Psoas muscle (tissue), 8 donors: ENCODE measurements at regions of chr5 and their contacts with region 1.

Region 1: GRCh38 chr5:16489322-16489791 is 23.8 kb upstream of the ZNF622 start:
- DNase-seq: no peak
- ATAC-seq: peak; percentile 74 to 79 (median 75)
- H3K4me3 ChIP-seq: peak overlapping the region; percentile 33
- H3K27ac ChIP-seq: peak overlapping the region; percentile 95
- H3K4me1 ChIP-seq: peaks cover 77% of the 10 kb centered on the region
- H3K27me3 ChIP-seq: no peaks in the 10 kb centered on the region
- CTCF ChIP-seq: peak; percentile 71

Region 2: GRCh38 chr5:16552666-16553343 is 63.4 kb after region 1 on chr5:
- intact Hi-C with region 1: loop called (anchors 2 to 5 kb)
- DNase-seq: peak; percentile 75 to 87
- ATAC-seq: peak; percentile 80 to 92 (median 90)
- H3K4me3 ChIP-seq: no peak overlapping the region
- H3K27ac ChIP-seq: peak overlapping the region; percentile 84
- H3K4me1 ChIP-seq: peaks cover 28% of the 10 kb centered on the region
- H3K27me3 ChIP-seq: no peaks in the 10 kb centered on the region
- CTCF ChIP-seq: peak; percentile 84

Region 3: DNA sequence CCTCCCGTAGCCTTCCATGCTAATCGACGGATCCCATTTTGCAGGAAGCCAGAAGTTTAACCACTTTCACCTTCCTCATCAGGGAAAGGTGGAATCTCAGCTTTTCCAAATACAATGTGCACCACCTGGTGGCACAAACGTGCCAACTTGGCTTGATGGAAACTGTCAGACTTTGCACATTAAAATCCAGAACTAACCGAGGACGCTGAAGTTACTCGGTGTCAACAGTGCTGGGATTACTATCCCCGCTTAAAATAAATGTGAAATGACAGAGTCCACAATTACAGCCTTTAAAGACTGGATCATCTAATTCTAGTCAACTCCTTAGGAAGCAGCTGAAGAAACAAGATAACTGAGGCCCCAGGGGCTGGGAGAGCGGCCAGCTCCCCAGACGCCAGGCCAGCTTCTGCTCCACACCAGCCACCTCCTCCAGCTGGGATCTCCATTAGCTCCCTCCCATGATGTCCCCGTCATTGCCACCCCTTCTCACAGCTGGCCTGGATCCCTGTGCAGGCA is 177.6 kb after region 1 on chr5:
- intact Hi-C with region 1: loop called in 1 of 2 experiments (anchors 1 kb)
- DNase-seq: no peak
- ATAC-seq: peak; percentile 48 to 83 (median 52)
- H3K4me3 ChIP-seq: no peak overlapping the region
- H3K27ac ChIP-seq: no peak overlapping the region
- H3K4me1 ChIP-seq: peaks cover 7% of the 10 kb centered on the region
- H3K27me3 ChIP-seq: peaks cover 0 to 2% (median 0%) of the 10 kb centered on the region in 3 donors
- CTCF ChIP-seq: peak; percentile 49

Region 4: GRCh38 chr5:16784843-16785791 is 295.8 kb after region 1 on chr5:
- intact Hi-C with region 1: loop called in 1 of 2 experiments (anchors 10 kb)
- DNase-seq: peak in 1 of 2 donors; percentile 63
- ATAC-seq: peak; percentile 86 to 96 (median 92)
- H3K4me3 ChIP-seq: no peak overlapping the region
- H3K27ac ChIP-seq: peak overlapping the region; percentile 67
- H3K4me1 ChIP-seq: peaks cover 16% of the 10 kb centered on the region
- H3K27me3 ChIP-seq: no peaks in the 10 kb centered on the region
- CTCF ChIP-seq: no peak

Region 5: GRCh38 chr5:16894236-16895057 is 405.1 kb after region 1 on chr5:
- intact Hi-C with region 1: no loop called
- DNase-seq: no peak
- ATAC-seq: peak in 3 of 4 donors; percentile 30 to 80 (median 69)
- H3K4me3 ChIP-seq: no peak overlapping the region
- H3K27ac ChIP-seq: no peak overlapping the region
- H3K4me1 ChIP-seq: peaks cover 14% of the 10 kb centered on the region
- H3K27me3 ChIP-seq: no peaks in the 10 kb centered on the region
- CTCF ChIP-seq: no peak

Region 6: GRCh38 chr5:17189381-17190036 is 700.2 kb after region 1 on chr5:
- intact Hi-C with region 1: loop called in 1 of 2 experiments (anchors 5 kb)
- DNase-seq: peak; percentile 63 to 76
- ATAC-seq: peak; percentile 53 to 74 (median 66)
- H3K4me3 ChIP-seq: no peak overlapping the region
- H3K27ac ChIP-seq: no peak overlapping the region
- H3K4me1 ChIP-seq: peaks cover 21% of the 10 kb centered on the region
- H3K27me3 ChIP-seq: no peaks in the 10 kb centered on the region
- CTCF ChIP-seq: peak; percentile 83